Sciatic nerve (tissue), 2 donors: ENCODE measurements at regions of chr17 and their contacts with region 1.

Region 1: DNA sequence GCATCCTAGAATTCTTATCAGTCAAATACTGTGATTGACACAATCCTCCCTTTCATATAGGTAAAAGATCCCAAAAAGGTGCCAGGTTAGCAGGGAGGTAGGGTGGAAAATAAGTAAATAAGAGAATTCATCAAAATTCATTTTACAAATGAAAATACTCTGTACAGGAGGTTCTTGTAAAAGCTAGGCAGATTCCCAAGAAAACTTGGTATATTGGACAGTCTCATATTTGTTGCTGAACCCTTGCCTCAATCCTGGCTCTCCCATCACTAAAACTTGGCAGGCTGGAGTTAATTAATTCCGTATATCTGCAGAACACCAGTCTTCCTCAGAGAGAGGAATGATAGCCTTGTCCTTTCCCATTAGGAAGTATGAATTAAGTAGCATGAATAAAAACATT is 66.2 kb upstream of the MTMR4 start:
- DNase-seq: no peak
- ATAC-seq: no peak

Region 2: DNA sequence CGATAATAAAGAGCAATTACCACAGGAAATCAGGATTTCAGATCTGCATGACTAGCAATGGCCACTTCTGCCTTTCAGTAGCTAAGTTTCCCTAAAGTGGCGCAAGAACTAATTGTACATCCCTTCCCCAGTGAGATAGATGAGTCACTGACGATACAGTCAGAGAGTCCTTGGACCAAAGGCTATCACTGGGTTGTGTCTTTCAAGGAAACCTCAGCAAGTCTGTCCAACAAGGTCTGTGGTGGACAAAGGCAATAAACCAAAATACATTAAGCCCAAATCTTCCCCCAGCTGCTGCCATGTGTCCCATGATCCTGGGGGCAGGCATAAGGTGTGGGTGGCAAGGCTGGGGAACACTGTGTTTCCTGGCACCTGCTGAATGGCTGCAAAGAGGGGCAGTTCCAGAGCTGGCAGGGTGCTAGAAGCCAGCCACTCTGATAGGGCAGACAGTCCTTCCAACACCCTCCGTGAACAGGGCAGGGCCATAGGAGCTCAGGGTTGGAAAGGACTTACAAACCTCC is 45.7 kb before region 1 on chr17:
- intact Hi-C with region 1: loop called (anchors 5 kb)
- DNase-seq: no peak
- ATAC-seq: no peak